PC-9 (cell line): ENCODE measurements at regions of chr7 and their contacts with region 1.

Region 1: GRCh38 chr7:90262438-90262837 is 17.5 kb downstream of the CFAP69 start:
- DNase-seq: no peak
- H3K4me3 ChIP-seq: no peak overlapping the region
- H3K27ac ChIP-seq: no peak overlapping the region
- H3K4me1 ChIP-seq: no peaks in the 10 kb centered on the region
- H3K27me3 ChIP-seq: no peaks in the 10 kb centered on the region
- CTCF ChIP-seq: peak; percentile 73

Region 2: GRCh38 chr7:90165724-90166123 is 96.7 kb before region 1 on chr7:
- CTCF ChIA-PET with region 1: no interaction called
- POLR2A ChIA-PET with region 1: no interaction called
- intact Hi-C with region 1: no loop called
- DNase-seq: no peak
- H3K4me3 ChIP-seq: no peak overlapping the region
- H3K27ac ChIP-seq: no peak overlapping the region
- H3K4me1 ChIP-seq: no peaks in the 10 kb centered on the region
- H3K27me3 ChIP-seq: no peaks in the 10 kb centered on the region
- CTCF ChIP-seq: no peak

Region 3: GRCh38 chr7:90244909-90245851 is 17.3 kb before region 1 on chr7 and contains the start of gene CFAP69:
- CTCF ChIA-PET with region 1: no interaction called
- POLR2A ChIA-PET with region 1: interaction called, 14 read pairs
- intact Hi-C with region 1: no loop called
- DNase-seq: peak; percentile 76 to 95
- H3K4me3 ChIP-seq: peak within 1 kb of the TSS; percentile 76
- H3K27ac ChIP-seq: no peak within 1 kb of the TSS
- H3K4me1 ChIP-seq: peaks cover 22% of the 10 kb centered on the region
- H3K27me3 ChIP-seq: no peaks in the 10 kb centered on the region
- CTCF ChIP-seq: 0 out of 2 replicates have a peak, but pooled peaks have one; percentile 18
- total RNA-seq, gene CFAP69: 15.0 and 18.5 TPM in 2 replicates

Region 4: GRCh38 chr7:90424720-90425119 is 162.3 kb after region 1 on chr7:
- CTCF ChIA-PET with region 1: no interaction called
- POLR2A ChIA-PET with region 1: no interaction called
- intact Hi-C with region 1: loop called (anchors 5 kb)
- DNase-seq: no peak
- H3K4me3 ChIP-seq: no peak overlapping the region
- H3K27ac ChIP-seq: no peak overlapping the region
- H3K4me1 ChIP-seq: 0 out of 2 replicates have a peak, but pooled peaks cover 8% of the 10 kb centered on the region
- H3K27me3 ChIP-seq: no peaks in the 10 kb centered on the region
- CTCF ChIP-seq: no peak